AG04449 (cell line): ENCODE measurements at regions of chr11 and their contacts with region 1.

Region 1: DNA sequence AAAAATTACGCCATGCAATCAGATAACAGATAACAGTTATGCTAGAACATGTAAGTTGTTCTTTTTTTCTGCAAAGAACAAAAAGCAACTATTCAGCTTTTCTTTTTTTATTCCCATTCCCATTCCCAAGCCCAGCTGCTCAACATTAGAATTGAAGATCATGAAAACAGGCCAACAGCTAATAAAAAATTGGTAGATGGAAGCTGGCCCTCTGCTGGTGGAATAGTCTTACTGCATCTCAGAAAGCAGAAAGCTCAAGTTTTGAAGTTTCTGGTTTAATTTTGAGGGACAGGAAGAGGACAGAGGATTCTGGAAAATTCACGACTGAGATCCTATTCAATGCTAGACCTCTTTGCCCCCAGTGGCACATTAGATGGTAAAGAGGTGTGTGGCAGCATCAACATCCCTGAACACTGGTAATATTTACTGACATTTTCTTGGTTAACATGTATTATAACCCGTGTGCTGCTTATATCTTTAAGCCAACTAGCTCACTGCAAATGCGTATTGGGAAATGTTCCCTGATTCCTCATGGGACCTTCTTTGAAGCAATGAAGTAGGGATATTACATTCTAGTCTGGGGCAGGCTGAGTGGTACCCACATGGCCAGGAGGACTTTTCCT is 591.2 kb downstream of the OPCML start:
- DNase-seq: no peak
- H3K4me3 ChIP-seq: no peak overlapping the region
- CTCF ChIP-seq: peak; percentile 65

Region 2: DNA sequence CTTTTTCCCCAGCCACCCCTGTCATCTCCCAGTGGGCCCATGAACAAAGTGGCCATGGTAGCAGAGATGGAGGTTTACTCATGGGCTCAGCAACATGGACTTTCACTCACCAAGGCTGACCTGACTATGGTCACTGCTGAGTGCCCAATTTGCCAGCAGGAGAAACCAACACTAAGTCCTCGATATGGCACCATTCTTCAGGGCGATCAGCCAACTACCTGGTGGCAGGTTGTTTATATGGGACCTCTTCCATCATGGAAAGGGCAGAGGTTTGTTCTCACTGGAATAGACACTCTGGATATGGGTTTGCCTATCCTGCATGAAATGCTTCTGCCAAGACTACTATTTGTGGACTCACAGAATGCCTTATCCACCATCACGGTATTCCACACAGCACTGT is 561.6 kb before region 1 on chr11:
- CTCF ChIA-PET with region 1: no interaction called
- POLR2A ChIA-PET with region 1: no interaction called
- DNase-seq: no peak
- H3K4me3 ChIP-seq: no peak overlapping the region
- CTCF ChIP-seq: no peak

Region 3: DNA sequence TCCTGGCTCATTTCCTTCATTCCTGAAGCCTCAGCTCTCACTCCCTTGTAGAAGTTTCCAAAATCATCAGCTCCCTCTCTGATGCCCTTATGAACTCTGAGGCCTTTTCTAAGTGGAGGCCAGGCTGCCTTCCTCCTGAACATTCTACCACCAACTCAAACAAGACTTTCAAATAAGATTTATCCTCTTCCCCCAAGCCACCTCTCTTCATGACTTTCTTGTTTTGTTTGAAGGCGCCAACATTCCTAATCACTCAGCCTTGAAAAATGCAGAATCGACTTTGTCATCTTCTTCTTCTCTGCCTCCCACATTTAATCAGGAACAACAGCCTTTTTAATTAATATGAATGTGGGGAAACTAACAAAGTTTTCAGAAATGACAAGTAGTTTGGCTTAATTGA is 336.7 kb before region 1 on chr11:
- CTCF ChIA-PET with region 1: interaction called, 11 read pairs
- POLR2A ChIA-PET with region 1: no interaction called
- DNase-seq: peak; percentile 49
- H3K4me3 ChIP-seq: no peak overlapping the region
- CTCF ChIP-seq: no peak

Region 4: GRCh38 chr11:132639986-132640385 is 301.1 kb before region 1 on chr11:
- CTCF ChIA-PET with region 1: interaction called, 18 read pairs
- POLR2A ChIA-PET with region 1: no interaction called
- DNase-seq: no peak
- H3K4me3 ChIP-seq: no peak overlapping the region
- CTCF ChIP-seq: no peak

Region 5: GRCh38 chr11:132788816-132789325 is 152.3 kb before region 1 on chr11:
- CTCF ChIA-PET with region 1: interaction called, 11 read pairs
- POLR2A ChIA-PET with region 1: no interaction called
- DNase-seq: no peak
- H3K4me3 ChIP-seq: no peak overlapping the region
- CTCF ChIP-seq: no peak

Region 6: GRCh38 chr11:132858223-132858622 is 82.9 kb before region 1 on chr11:
- CTCF ChIA-PET with region 1: interaction called, 11 read pairs
- POLR2A ChIA-PET with region 1: no interaction called
- DNase-seq: no peak
- H3K4me3 ChIP-seq: no peak overlapping the region
- CTCF ChIP-seq: peak; percentile 61

Region 7: GRCh38 chr11:132962041-132962440 is 20.9 kb after region 1 on chr11:
- CTCF ChIA-PET with region 1: interaction called, 11 read pairs
- POLR2A ChIA-PET with region 1: no interaction called
- DNase-seq: peak; percentile 53
- H3K4me3 ChIP-seq: no peak overlapping the region; the same call in 1 of the 2 replicates
- CTCF ChIP-seq: no peak